GM12878 (cell line): ENCODE measurements at regions of chrX and their contacts with region 1.

Region 1: DNA sequence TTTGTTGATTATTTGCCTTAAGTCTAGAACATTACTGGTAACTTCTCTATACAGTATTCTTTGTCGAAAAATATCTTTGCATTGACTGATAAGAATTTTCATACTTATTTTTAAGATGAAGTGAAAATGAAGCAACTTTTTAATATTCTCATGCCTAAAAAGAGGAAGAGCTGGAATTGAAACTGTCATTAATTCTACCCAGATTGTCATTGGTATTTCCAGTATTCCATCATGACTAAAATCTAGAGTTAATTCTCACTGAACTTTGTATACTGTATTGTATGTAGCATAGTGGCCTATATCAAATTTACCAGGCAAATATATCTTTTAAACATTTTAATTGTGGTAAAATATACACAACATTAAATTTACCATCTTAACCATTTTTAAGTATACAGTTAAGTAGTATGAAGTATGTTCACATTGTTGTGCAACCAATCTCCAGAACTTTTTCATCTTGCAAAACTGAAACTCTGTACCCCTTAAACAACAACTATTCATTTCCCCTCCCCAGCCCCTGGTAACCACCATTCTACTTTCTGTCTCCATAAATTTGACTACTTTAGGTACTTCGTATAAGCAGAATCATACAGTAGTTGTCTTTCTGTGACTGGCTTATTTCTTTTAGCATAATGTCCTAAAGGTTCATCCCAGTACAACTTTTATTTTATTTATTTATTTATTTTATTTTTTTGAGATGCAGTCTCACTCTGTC is 24.3 kb upstream of the ZNF41 start:
- DNase-seq: no peak
- ATAC-seq: peak; percentile 60
- H3K4me3 ChIP-seq: no peak overlapping the region
- H3K27ac ChIP-seq: no peak overlapping the region
- H3K4me1 ChIP-seq: no peaks in the 10 kb centered on the region
- H3K27me3 ChIP-seq: no peaks in the 10 kb centered on the region
- CTCF ChIP-seq: no peak
- EP300 ChIP-seq: no peak
- POLR2A ChIP-seq: no peak
- RAD21 ChIP-seq: no peak

Region 2: GRCh38 chrX:47523297-47523696 is 16.0 kb after region 1 on chrX:
- CTCF ChIA-PET with region 1: interaction called, 178 read pairs
- POLR2A ChIA-PET with region 1: interaction called, 8 read pairs
- RAD21 ChIA-PET with region 1: interaction called, 4 read pairs
- SMC1A ChIA-PET with region 1: interaction called, 5 read pairs
- in situ Hi-C with region 1: no loop called
- intact Hi-C with region 1: no loop called
- DNase-seq: no peak
- ATAC-seq: peak; percentile 99
- H3K4me3 ChIP-seq: peak overlapping the region; percentile 50
- H3K27ac ChIP-seq: peak overlapping the region; percentile 10; the same call in 1 of the 2 replicates
- H3K4me1 ChIP-seq: no peaks in the 10 kb centered on the region
- H3K27me3 ChIP-seq: no peaks in the 10 kb centered on the region
- CTCF ChIP-seq: peak; percentile 54 to 85 (median 81); a peak in 5 of 6 replicates
- EP300 ChIP-seq: no peak
- POLR2A ChIP-seq: no peak
- RAD21 ChIP-seq: peak; percentile 72